ENCODE measurements at regions of chr2 and their contacts with region 1.

Region 1: DNA sequence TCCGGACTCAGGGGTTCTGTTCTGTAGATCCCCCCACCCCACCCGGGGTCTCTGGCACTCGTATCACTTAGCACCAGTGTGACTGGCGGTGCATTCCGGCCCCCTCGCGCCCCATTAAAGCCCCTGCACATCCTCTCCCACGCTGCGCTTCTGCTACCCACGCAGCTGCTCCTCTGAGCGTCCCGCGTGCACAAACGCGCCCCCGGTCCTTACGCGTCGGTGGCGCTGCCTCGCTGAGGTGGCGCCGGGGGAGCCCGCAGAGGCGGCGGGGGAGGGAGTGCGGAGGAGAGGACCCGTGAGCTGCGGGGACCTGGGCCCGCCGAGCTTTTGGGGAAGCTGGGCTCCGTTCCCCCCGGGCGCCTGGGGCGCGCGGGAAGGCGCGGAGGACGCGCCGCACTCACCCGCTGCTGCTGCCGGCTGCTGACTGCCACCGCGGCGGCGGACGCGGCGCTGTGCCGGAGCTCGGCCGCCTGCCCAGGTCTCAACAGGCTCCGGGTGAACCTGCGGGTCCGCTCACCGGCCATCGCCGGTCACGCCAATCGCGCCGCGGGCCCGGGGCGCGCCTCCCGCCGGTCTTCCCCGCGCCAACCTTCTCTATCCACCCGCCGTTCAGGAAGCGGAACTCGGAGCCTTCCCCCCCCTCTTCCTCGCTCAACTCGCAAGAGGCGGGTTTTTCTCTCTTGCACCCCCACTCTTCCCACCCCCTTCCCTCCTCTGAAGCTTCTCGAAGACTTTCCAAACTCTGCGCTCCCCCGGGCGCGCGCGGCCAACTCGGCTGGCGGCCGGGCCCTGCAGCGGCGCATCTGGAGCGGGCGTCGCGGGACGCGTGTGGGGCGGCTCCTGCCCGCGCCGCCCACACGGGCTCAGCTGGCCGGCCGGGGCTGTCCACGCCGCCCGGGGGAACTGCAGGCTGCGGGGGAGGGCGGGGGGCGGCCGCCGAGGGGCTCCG is at the start of gene DOCK10:
- DNase-seq: peak in 8 of 10 donors; percentile 27 to 78 (median 54)
- H3K4me3 ChIP-seq: peak within 1 kb of the TSS; percentile 52 to 87 (median 74)
- H3K27ac ChIP-seq: peak within 1 kb of the TSS; percentile 33 to 98 (median 93)
- H3K27me3 ChIP-seq: peaks cover 0 to 30% (median 5%) of the 10 kb centered on the region in 45 donors
- CTCF ChIP-seq: peak in 15 of 56 donors; percentile 7 to 39 (median 15)
- total RNA-seq, gene DOCK10: 24.3 to 264 (median 89.2) TPM

Region 2: DNA sequence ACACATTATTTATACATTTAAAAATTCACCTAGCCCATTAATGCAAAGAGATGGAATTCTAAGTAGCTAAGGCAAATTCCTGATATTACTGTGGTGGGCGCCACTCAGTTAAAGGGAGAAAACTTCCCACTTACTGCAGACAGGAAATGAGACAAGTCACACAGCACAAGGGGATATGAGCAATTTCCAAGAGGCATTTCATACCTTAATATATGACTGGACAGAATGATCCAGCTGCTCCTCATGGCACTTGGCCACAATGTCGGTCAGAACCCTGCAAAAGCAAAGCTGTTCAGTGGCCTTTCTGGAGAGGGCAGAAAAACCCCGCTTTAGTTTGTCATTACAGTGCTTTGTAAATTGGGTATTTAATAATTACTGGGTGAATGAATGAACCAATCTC is 204.6 kb before region 1 on chr2:
- intact Hi-C with region 1: no loop called
- DNase-seq: no peak
- H3K4me3 ChIP-seq: no peak overlapping the region
- H3K27ac ChIP-seq: peak overlapping the region in 24 of 59 donors; percentile 5 to 75 (median 46)
- H3K27me3 ChIP-seq: no peaks in the 10 kb centered on the region
- CTCF ChIP-seq: no peak

Region 3: GRCh38 chr2:225002039-225002655 is 40.0 kb before region 1 on chr2:
- intact Hi-C with region 1: loop called in 1 of 2 experiments (anchors 5 kb)
- DNase-seq: peak in 1 of 10 donors; percentile 61
- H3K4me3 ChIP-seq: no peak overlapping the region
- H3K27ac ChIP-seq: peak overlapping the region in 42 of 59 donors; percentile 2 to 82 (median 56)
- H3K27me3 ChIP-seq: peaks cover 0 to 2% (median 0%) of the 10 kb centered on the region in 45 donors
- CTCF ChIP-seq: peak; percentile 47 to 87 (median 80)

Region 4: GRCh38 chr2:225074366-225074765 is 32.2 kb after region 1 on chr2:
- intact Hi-C with region 1: loop called in 1 of 2 experiments (anchors 1 kb)
- DNase-seq: no peak
- H3K4me3 ChIP-seq: no peak overlapping the region
- H3K27ac ChIP-seq: no peak overlapping the region
- H3K27me3 ChIP-seq: no peaks in the 10 kb centered on the region
- CTCF ChIP-seq: no peak

Region 5: DNA sequence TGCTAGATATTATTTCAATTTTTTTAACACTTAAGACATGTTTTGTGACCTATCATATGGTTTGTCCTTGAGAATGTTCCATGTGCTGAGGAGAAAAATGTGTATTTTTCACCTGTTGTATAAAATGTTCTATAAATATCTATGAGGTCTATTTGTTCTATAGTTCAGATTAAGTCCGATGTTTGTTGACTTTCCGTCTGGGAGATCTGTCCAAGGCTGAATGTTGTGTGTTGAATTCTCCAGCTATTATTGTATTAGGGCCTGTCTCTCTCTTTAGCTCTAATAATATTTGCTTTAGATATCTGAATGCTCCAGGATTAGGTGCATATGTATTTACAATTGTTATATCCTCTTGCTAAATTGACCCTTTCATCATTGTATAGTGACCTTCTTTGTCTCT is 501.5 kb after region 1 on chr2:
- intact Hi-C with region 1: no loop called
- DNase-seq: no peak
- H3K4me3 ChIP-seq: no peak overlapping the region
- H3K27ac ChIP-seq: no peak overlapping the region
- H3K27me3 ChIP-seq: peaks cover 0 to 2% (median 0%) of the 10 kb centered on the region in 45 donors
- CTCF ChIP-seq: no peak

Region 6: GRCh38 chr2:225948903-225949302 is 906.8 kb after region 1 on chr2:
- intact Hi-C with region 1: no loop called
- DNase-seq: no peak
- H3K4me3 ChIP-seq: no peak overlapping the region
- H3K27ac ChIP-seq: no peak overlapping the region
- H3K27me3 ChIP-seq: no peaks in the 10 kb centered on the region
- CTCF ChIP-seq: no peak

Measured in dorsolateral prefrontal cortex (tissue), 120 donors.